Activated CD8-positive, alpha-beta T cell treated with anti-CD3 and anti-CD28 coated beads, Interleukin-2, amount 10 ng/mL, durations not matched to agents 7 days and 5 days (primary cell): ENCODE measurements at regions of chr20 and their contacts with region 1.

Region 1: GRCh38 chr20:50750145-50750671 is 18.8 kb downstream of the PARD6B start:
- DNase-seq: no peak
- ATAC-seq: no peak
- H3K4me3 Mint-ChIP-seq: no peak overlapping the region
- H3K27ac Mint-ChIP-seq: no peak overlapping the region
- H3K4me1 Mint-ChIP-seq: peaks cover 17% of the 10 kb centered on the region
- H3K27me3 Mint-ChIP-seq: no peaks in the 10 kb centered on the region

Region 2: GRCh38 chr20:50625986-50626677 is 124.1 kb before region 1 on chr20:
- CTCF ChIA-PET with region 1: interaction called, 23 read pairs
- POLR2A ChIA-PET with region 1: no interaction called
- DNase-seq: peak; percentile 35
- ATAC-seq: no peak
- H3K4me3 Mint-ChIP-seq: no peak overlapping the region
- H3K27ac Mint-ChIP-seq: no peak overlapping the region
- H3K4me1 Mint-ChIP-seq: no peaks in the 10 kb centered on the region
- H3K27me3 Mint-ChIP-seq: no peaks in the 10 kb centered on the region

Region 3: DNA sequence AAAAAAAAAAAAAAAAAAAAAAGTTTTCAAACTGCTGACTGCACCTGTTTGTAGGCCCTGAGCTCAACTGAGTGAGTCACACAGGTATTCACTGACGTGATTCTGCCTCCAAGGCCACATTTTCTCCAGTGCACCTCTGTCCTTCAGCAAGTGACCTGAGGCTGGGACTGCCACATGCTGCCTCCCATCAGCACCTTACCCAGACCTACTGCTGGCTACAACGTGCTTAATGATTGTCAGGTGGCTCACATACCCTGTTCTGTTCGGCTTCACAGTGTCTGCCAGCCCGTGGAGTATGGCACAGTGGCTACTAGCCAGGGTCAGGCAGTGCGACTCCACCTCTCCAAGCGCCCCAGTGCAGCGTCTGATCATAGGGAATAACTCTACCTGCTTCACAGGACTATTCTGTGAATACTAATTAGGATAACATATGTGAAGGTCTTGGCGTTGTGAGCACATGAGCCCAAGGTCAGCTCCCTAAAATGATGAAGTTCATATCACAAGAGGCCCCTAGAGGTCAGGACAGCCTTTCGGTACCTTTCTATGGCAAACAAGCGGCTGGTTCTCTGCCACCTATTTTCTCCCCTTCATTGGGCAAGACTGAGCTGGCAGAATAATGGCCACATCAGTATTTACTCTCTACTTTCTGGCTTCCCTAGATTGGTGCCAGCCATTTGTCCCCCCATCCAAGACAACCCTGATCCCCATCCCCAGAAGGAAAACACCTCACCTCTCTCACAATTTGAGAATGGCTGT is 86.9 kb before region 1 on chr20:
- CTCF ChIA-PET with region 1: interaction called, 12 read pairs
- POLR2A ChIA-PET with region 1: no interaction called
- DNase-seq: no peak
- ATAC-seq: no peak
- H3K4me3 Mint-ChIP-seq: no peak overlapping the region
- H3K27ac Mint-ChIP-seq: no peak overlapping the region
- H3K4me1 Mint-ChIP-seq: no peaks in the 10 kb centered on the region
- H3K27me3 Mint-ChIP-seq: peaks cover 8% of the 10 kb centered on the region

Region 4: DNA sequence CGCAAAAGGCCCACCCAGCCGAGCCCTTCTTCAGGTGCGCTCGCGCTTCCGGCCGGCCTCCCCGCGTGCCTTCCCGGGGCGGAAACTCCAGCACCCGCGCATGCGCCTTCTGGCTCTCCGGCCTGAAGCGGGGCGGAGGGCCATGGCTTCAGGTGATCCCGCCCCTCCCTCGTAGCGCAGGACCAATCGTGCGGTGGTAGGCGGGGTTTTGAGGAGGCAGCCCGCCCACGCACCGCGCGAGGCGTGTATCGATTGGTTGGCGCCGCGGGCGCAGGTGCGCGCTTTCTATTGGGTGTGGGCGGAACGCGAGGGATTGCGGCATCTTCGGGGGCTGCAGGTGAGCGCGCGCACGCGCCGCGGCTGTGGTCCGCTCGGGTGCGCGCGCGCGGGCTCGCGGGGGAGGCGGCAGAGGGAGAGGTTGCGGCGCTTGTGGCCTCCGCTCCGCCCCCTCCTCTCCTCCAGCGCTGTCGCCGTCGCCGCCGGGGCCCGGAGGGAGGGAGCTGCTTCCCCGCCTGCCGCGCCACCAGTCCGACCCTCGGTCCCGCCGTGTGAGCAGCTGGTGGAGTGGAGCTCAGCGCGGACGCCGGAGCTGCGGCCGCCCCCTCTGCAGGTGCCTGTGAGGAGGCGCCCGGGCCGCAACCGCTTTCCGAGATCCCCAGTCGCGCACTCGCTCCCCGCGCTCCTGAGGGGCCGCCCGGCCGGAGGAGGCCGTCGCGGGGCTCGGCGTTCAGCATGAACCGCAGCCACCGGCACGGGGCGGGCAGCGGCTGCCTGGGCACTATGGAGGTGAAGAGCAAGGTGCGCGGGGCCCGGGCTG is 18.9 kb before region 1 on chr20 and contains the start of gene PARD6B:
- CTCF ChIA-PET with region 1: interaction called, 16 read pairs
- POLR2A ChIA-PET with region 1: interaction called, 4 read pairs
- DNase-seq: peak; percentile 99
- ATAC-seq: peak; percentile 97
- H3K4me3 Mint-ChIP-seq: peak within 1 kb of the TSS; percentile 88
- H3K27ac Mint-ChIP-seq: peak within 1 kb of the TSS; percentile 81
- H3K4me1 Mint-ChIP-seq: peaks cover 22% of the 10 kb centered on the region
- H3K27me3 Mint-ChIP-seq: no peaks in the 10 kb centered on the region
- total RNA-seq, gene PARD6B: 4.3 to 6.0 TPM

Region 5: GRCh38 chr20:50879649-50880550 is 129.7 kb after region 1 on chr20:
- CTCF ChIA-PET with region 1: no interaction called
- POLR2A ChIA-PET with region 1: no interaction called
- DNase-seq: no peak
- ATAC-seq: no peak
- H3K4me3 Mint-ChIP-seq: no peak overlapping the region
- H3K27ac Mint-ChIP-seq: no peak overlapping the region
- H3K4me1 Mint-ChIP-seq: peaks cover under 1% of the 10 kb centered on the region
- H3K27me3 Mint-ChIP-seq: no peaks in the 10 kb centered on the region